Naive thymus-derived CD4-positive, alpha-beta T cell (primary cell): ENCODE measurements at regions of chr10 and their contacts with region 1.

Region 1: DNA sequence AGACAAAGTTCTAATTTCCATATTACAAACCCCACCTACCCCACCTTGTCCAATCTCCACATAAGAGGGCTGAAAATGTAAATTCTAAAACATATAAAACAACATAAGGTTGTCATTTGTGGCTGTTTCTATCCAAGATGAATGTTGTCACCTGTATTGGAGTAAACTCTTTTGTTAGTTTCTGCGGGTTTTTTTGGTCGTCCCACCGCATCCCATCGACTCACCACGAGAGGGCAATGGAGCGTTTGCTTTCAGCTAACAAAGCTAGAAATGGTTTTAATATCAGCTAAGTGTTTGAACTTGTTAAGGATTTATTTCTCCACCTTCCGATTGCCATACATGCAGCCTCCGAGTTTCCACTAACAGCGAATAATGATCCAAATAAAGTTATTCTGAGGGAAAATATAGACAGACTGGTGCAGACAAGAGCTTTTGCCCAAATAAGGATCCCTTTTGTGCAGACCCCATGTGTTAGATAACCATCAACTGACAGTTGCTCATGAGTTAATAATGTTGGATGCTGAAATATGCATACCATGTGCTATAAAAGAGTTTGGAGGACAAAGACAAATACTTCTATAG is 137.2 kb downstream of the ARID5B start:
- DNase-seq: peak; percentile 40 to 84 (median 69)
- ATAC-seq: peak; percentile 87
- H3K4me3 ChIP-seq: peak overlapping the region; percentile 37
- H3K4me3 Mint-ChIP-seq: peak overlapping the region; percentile 64 to 87 (median 72)
- H3K27ac ChIP-seq: peak overlapping the region; percentile 60
- H3K27ac Mint-ChIP-seq: peak overlapping the region; percentile 20 to 94 (median 74)
- H3K4me1 ChIP-seq: peaks cover 16 to 56% of the 10 kb centered on the region in 2 donors
- H3K4me1 Mint-ChIP-seq: peaks cover 48 to 92% (median 86%) of the 10 kb centered on the region in 7 donors
- H3K27me3 ChIP-seq: no peaks in the 10 kb centered on the region
- H3K27me3 Mint-ChIP-seq: no peaks in the 10 kb centered on the region

Region 2: DNA sequence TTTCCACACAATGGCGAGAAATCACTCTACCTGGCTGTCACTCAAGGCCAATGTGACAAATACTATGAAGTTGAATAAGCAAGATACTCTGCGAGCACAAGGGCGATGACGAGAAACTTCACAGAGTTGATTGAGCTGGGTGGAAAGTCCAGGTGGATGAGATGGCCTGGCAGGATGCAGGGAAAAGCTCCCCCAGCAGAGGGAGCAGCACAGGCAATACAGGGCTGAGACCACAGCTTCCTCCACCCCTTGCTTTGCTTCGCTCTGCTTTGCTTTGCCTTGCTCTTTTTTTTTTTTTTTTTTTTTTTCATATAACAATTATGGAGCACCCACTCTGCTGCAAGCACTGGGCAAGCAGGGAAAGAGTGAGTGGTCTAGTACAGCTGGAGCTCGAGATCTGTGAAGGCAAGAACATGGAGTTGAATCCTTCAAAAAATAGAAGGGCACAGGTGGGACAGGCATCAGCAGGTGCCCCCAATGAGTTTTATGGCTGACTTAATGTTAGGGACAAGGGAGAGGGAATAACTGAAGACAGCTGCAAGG is 287.7 kb before region 1 on chr10:
- CTCF ChIA-PET with region 1: interaction called, 3 read pairs
- POLR2A ChIA-PET with region 1: no interaction called
- intact Hi-C with region 1: loop called (anchors 5 kb)
- DNase-seq: peak; percentile 37 to 67 (median 58)
- ATAC-seq: peak; percentile 94
- H3K4me3 ChIP-seq: no peak overlapping the region
- H3K4me3 Mint-ChIP-seq: peak overlapping the region in 6 of 10 donors; percentile 6 to 58 (median 36)
- H3K27ac ChIP-seq: no peak overlapping the region
- H3K27ac Mint-ChIP-seq: peak overlapping the region in 4 of 9 donors; percentile 10 to 88 (median 48)
- H3K4me1 ChIP-seq: peaks cover 12 to 15% of the 10 kb centered on the region in 2 donors
- H3K4me1 Mint-ChIP-seq: peaks cover 0 to 29% (median 26%) of the 10 kb centered on the region in 7 donors
- H3K27me3 ChIP-seq: no peaks in the 10 kb centered on the region
- H3K27me3 Mint-ChIP-seq: peaks cover 0 to 4% (median 0%) of the 10 kb centered on the region in 5 donors

Region 3: DNA sequence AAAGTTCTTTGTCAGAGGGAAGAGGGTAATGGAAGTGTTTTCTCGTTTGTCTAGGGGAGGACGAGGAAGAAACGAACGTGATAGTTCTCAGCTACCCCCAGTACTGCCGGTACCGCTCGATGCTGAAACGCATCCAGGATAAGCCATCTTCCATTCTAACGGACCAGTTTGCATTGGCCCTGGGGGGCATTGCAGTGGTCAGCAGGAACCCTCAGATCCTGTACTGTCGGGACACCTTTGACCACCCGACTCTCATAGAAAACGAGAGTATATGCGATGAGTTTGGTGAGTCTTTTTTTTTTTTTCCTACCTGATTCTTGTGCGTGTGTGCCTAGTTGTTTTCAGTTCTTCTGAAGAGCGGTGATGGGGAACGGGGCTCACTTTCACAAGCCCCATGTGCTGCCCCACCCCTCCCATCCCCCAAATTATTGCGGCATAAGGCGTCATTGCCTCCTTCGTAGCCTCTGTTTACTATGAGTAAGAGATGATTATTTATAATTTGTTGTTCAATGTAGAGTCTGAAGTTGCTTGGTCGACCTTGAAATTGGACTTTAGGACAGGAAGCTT is 38.6 kb before region 1 on chr10:
- CTCF ChIA-PET with region 1: no interaction called
- POLR2A ChIA-PET with region 1: no interaction called
- intact Hi-C with region 1: no loop called
- DNase-seq: no peak
- ATAC-seq: peak; percentile 41
- H3K4me3 ChIP-seq: no peak overlapping the region
- H3K4me3 Mint-ChIP-seq: no peak overlapping the region
- H3K27ac ChIP-seq: no peak overlapping the region
- H3K27ac Mint-ChIP-seq: peak overlapping the region in 3 of 9 donors; percentile 8 to 22 (median 21)
- H3K4me1 ChIP-seq: peaks cover under 1% of the 10 kb centered on the region in 2 donors
- H3K4me1 Mint-ChIP-seq: peaks cover 13 to 65% (median 49%) of the 10 kb centered on the region in 7 donors
- H3K27me3 ChIP-seq: no peaks in the 10 kb centered on the region
- H3K27me3 Mint-ChIP-seq: no peaks in the 10 kb centered on the region

Region 4: GRCh38 chr10:62025901-62026879 is 12.5 kb before region 1 on chr10:
- CTCF ChIA-PET with region 1: interaction called, 10 read pairs
- POLR2A ChIA-PET with region 1: no interaction called
- intact Hi-C with region 1: no loop called
- DNase-seq: no peak
- ATAC-seq: no peak
- H3K4me3 ChIP-seq: no peak overlapping the region
- H3K4me3 Mint-ChIP-seq: no peak overlapping the region
- H3K27ac ChIP-seq: no peak overlapping the region
- H3K27ac Mint-ChIP-seq: peak overlapping the region in 2 of 9 donors; percentile 23 to 71
- H3K4me1 ChIP-seq: peaks cover 0 to 8% of the 10 kb centered on the region in 2 donors
- H3K4me1 Mint-ChIP-seq: peaks cover 23 to 77% (median 63%) of the 10 kb centered on the region in 7 donors
- H3K27me3 ChIP-seq: no peaks in the 10 kb centered on the region
- H3K27me3 Mint-ChIP-seq: no peaks in the 10 kb centered on the region

Region 5: DNA sequence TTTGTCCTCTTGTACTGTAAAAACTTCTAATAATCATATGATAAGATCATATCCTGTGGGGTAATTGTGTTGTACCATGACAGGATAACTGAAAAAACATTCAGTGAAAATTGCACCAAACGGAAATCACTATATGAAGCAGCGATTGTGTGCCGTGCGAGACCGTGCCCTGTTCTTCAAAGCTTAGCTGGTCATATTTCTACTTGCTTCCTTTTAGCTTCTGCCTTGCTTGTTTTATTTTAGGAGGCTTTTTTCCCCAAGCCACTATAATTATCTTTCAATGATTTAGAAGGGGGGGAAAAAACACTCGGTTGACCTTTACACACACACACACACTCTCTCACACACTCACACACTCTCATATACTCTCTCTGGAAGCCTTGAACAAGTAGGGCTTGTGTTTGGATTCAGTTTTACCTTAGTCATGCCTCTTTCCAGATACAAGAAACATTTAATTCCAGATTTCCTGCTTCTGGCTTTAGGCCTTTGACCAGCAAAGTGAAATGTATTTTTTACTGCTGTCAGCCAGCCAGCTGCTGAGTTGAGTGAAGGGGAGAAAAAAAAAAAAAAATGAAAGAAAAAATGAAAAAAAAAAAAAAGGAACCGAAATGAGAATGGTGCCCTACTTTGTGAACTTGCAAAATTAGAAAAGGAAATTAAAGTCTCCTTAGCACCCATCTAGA is 44.2 kb after region 1 on chr10:
- CTCF ChIA-PET with region 1: interaction called, 5 read pairs
- POLR2A ChIA-PET with region 1: interaction called, 3 read pairs
- intact Hi-C with region 1: loop called (anchors 1 kb)
- DNase-seq: peak in 7 of 9 donors; percentile 23 to 70 (median 53)
- ATAC-seq: peak; percentile 83
- H3K4me3 ChIP-seq: peak overlapping the region; percentile 35
- H3K4me3 Mint-ChIP-seq: peak overlapping the region; percentile 46 to 79 (median 72)
- H3K27ac ChIP-seq: peak overlapping the region; percentile 63
- H3K27ac Mint-ChIP-seq: peak overlapping the region; percentile 69 to 92 (median 87)
- H3K4me1 ChIP-seq: peaks cover 23 to 41% of the 10 kb centered on the region in 2 donors
- H3K4me1 Mint-ChIP-seq: peaks cover 28 to 72% (median 58%) of the 10 kb centered on the region in 7 donors
- H3K27me3 ChIP-seq: no peaks in the 10 kb centered on the region
- H3K27me3 Mint-ChIP-seq: no peaks in the 10 kb centered on the region

Region 6: DNA sequence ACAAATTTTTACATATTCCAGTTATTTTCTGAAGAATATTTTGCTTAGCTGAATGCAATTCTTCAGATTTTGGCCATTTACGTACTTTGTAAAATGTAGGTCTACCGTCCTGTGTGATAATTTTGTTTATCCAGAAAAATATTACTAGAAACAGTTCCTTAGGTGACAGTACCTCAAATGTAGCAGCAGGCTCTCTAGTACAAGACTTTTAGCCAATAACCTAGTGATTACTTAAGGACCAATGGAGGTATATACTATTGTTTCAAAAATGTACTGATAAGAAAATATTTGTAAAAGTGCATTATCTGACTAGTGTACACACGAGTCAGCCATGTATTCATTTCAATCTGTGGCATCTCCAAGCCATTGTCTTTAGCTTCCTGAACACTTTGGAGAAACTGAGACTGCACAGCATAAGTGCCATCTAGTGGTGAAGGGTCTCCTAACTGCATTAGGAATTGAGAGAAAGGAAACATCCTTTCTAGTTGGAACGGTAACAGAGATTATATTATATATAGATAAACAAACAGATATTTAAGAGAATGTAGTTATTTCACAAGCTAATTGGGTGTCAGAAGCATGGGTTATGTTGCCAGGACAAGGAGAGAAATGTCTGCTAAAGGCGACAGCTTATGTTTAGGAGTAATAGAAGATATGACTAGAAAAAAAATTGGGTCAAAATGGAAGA is 206.2 kb after region 1 on chr10:
- CTCF ChIA-PET with region 1: interaction called, 112 read pairs
- POLR2A ChIA-PET with region 1: interaction called, 20 read pairs
- intact Hi-C with region 1: loop called (anchors 1 kb)
- DNase-seq: peak in 8 of 9 donors; percentile 35 to 80 (median 68)
- ATAC-seq: peak; percentile 94
- H3K4me3 ChIP-seq: no peak overlapping the region
- H3K4me3 Mint-ChIP-seq: peak overlapping the region in 6 of 10 donors; percentile 16 to 64 (median 42)
- H3K27ac ChIP-seq: no peak overlapping the region
- H3K27ac Mint-ChIP-seq: peak overlapping the region in 8 of 9 donors; percentile 6 to 85 (median 53)
- H3K4me1 ChIP-seq: peaks cover 6 to 9% of the 10 kb centered on the region in 2 donors
- H3K4me1 Mint-ChIP-seq: peaks cover 9 to 37% (median 30%) of the 10 kb centered on the region in 7 donors
- H3K27me3 ChIP-seq: no peaks in the 10 kb centered on the region
- H3K27me3 Mint-ChIP-seq: no peaks in the 10 kb centered on the region

Region 7: DNA sequence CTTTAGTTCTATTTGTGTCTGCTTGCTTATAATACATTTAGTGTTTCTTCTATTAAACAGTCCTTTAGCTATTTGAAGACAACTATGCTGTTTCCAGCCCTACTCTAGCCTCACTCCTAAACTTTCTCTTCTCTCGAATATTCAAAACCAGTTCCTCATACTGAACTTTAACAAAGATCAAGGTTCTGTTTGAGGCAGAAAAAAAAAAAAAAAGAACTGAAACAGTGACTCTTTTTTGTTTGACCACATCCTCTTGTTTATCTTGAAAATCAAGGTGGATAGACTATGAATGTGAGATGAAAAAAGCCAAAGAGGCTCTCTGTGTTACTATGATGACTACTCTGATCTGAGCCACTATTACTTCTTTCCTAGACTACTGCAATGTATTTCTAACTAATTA is 489.7 kb after region 1 on chr10:
- CTCF ChIA-PET with region 1: no interaction called
- POLR2A ChIA-PET with region 1: no interaction called
- intact Hi-C with region 1: loop called in 1 of 2 experiments (anchors 5 kb)
- DNase-seq: peak in 7 of 9 donors; percentile 42 to 83 (median 78)
- ATAC-seq: peak; percentile 95
- H3K4me3 ChIP-seq: no peak overlapping the region
- H3K4me3 Mint-ChIP-seq: peak overlapping the region; percentile 0 to 78 (median 70)
- H3K27ac ChIP-seq: peak overlapping the region; percentile 44
- H3K27ac Mint-ChIP-seq: peak overlapping the region; percentile 47 to 86 (median 75)
- H3K4me1 ChIP-seq: peaks cover 24 to 39% of the 10 kb centered on the region in 2 donors
- H3K4me1 Mint-ChIP-seq: peaks cover 32 to 49% (median 43%) of the 10 kb centered on the region in 7 donors
- H3K27me3 ChIP-seq: no peaks in the 10 kb centered on the region
- H3K27me3 Mint-ChIP-seq: peaks cover 0 to 15% (median 0%) of the 10 kb centered on the region in 5 donors